Heart left ventricle (tissue), 16 donors: ENCODE measurements at regions of chr9 and their contacts with region 1.

Region 1: GRCh38 chr9:27967210-27967609 is 393.9 kb upstream of the C9orf72 start:
- DNase-seq: no peak
- ATAC-seq: no peak
- H3K4me3 ChIP-seq: no peak overlapping the region
- H3K27ac ChIP-seq: no peak overlapping the region
- H3K4me1 ChIP-seq: no peaks in the 10 kb centered on the region
- H3K27me3 ChIP-seq: no peaks in the 10 kb centered on the region
- CTCF ChIP-seq: no peak
- POLR2A ChIP-seq: no peak

Region 2: DNA sequence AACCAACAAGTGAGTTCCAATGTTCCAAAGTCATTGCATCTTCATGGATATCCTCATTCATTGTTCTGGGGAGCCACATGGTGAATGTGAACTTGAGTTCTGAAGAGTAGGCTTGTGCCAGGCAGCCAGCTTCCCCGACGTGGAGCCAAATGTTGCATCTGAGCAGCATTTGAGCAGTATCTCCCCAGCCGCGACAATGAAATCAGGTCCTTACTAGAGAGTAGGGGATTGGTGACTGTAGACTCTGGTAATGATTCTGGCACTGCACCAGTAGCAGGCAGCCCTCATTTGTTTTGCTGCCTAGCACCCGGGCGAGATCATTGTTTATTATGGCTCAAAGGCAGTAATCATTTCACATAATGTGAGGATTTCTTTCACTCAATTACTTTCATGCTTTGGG is 57.5 kb after region 1 on chr9:
- intact Hi-C with region 1: loop called in 1 of 10 experiments (anchors 10 kb)
- DNase-seq: no peak
- ATAC-seq: no peak
- H3K4me3 ChIP-seq: no peak overlapping the region
- H3K27ac ChIP-seq: no peak overlapping the region
- H3K4me1 ChIP-seq: no peaks in the 10 kb centered on the region
- H3K27me3 ChIP-seq: no peaks in the 10 kb centered on the region
- CTCF ChIP-seq: no peak
- POLR2A ChIP-seq: no peak